PC-9 (cell line): ENCODE measurements at regions of chr11 and their contacts with region 1.

Region 1: GRCh38 chr11:96263361-96263763 is 79.6 kb downstream of the MAML2 start:
- DNase-seq: peak in 1 of 2 experiments; percentile 97
- H3K4me3 ChIP-seq: peak overlapping the region; percentile 17; the same call in 1 of the 2 replicates
- H3K27ac ChIP-seq: peak overlapping the region; percentile 77
- H3K4me1 ChIP-seq: peaks cover 82% of the 10 kb centered on the region
- H3K27me3 ChIP-seq: no peaks in the 10 kb centered on the region
- CTCF ChIP-seq: no peak

Region 2: DNA sequence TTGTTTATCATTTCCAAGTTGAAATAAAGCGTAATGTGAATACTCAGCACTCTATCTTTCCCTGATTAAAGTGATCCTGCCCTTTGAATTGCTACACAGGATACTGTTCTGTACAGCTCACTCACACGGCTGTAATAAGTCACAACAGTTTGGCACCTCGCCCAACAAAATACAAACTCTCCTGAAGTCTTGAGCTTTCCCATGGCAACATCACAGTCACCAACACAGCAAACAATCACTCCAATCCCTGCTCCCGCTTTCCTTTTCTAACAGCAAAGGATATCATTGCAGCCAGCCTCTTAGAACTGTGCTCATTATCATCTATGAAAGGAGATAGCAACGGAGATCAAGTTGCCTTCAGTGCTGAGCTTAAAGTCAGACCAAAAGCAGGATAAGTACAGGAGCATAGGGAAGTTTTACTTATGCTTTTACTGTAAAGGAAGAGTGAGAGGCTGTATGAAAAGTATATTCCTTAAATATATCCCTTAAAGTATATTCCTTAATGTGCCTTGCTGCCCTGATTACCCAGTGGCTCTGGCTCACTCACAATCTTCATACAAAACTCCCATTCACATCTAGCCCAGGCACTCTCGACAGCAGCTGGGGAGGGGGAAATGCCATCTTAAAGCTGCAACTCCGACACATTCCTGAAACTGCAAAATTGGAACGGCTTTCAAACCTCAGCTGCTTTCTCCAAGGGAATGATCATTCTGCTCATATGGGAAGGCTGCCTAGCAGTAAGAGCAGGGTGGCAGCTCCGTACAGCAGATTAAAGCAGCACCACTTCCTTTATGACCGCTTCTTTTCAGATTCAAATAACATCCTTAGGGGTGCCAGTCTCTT is 43.8 kb after region 1 on chr11:
- CTCF ChIA-PET with region 1: interaction called, 3 read pairs
- POLR2A ChIA-PET with region 1: no interaction called
- intact Hi-C with region 1: loop called (anchors 5 kb)
- DNase-seq: peak; percentile 84 to 100
- H3K4me3 ChIP-seq: peak overlapping the region; percentile 43
- H3K27ac ChIP-seq: peak overlapping the region; percentile 96
- H3K4me1 ChIP-seq: peaks cover 99% of the 10 kb centered on the region
- H3K27me3 ChIP-seq: no peaks in the 10 kb centered on the region
- CTCF ChIP-seq: no peak